ENCODE measurements at regions of chr5 and their contacts with region 1.

Region 1: DNA sequence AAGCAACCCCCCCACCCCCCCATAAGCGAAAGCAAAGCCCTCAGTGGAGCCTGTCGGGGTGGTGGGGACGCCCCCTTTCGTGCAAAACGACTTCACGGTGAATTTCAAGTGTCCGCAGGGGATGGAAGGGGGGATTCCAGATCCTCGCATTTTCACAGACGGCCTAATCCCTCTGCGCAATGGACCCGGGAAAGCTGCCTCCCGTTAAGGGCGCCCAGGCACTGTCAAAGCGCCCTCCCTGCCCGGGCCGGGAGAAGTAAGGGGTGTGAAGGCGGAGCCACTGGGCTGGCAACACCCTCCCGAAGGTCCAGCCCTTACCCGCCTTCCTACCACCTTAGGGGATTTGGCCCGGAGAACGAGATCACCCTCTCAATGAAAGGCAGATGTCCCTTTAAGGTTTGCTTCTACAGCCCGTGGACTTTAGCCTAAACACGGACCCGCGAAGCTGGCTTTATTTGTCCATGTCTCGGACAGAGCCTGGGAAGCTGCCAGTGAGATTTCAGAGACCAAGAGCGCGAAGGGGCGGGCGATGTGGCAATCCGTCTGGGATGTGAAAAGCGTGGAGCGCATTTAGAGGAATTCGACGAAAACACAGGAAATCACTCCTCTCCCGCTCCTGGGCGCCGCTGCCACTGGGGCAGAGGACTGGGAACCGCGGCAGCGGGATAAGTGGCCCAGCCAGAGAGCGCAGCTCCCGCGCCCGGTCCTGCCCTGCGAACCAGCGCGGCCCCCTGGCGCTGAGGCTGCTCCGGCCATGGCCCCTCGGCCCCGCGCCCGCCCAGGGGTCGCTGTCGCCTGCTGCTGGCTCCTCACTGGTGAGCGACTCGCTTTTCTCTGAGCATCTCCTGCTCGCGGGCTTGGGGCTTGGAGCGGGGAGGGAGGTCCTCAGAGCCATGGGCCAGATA is at the starts of genes ITGA1 and PELO:
- DNase-seq: peak; percentile 88 to 90
- H3K4me3 ChIP-seq: peak within 1 kb of the TSS; percentile 62
- H3K4me3 Mint-ChIP-seq: peak within 1 kb of the TSS; percentile 97
- H3K27ac Mint-ChIP-seq: peak within 1 kb of the TSS; percentile 85
- H3K4me1 ChIP-seq: peaks cover 13% of the 10 kb centered on the region
- H3K4me1 Mint-ChIP-seq: peaks cover 34% of the 10 kb centered on the region
- H3K27me3 ChIP-seq: no peaks in the 10 kb centered on the region
- H3K27me3 Mint-ChIP-seq: no peaks in the 10 kb centered on the region
- CTCF ChIP-seq: peak; percentile 43 to 69
- total RNA-seq, gene ITGA1: 26.4 and 27.4 TPM in 2 replicates
- total RNA-seq, gene PELO: 25.9 and 26.7 TPM in 2 replicates

Region 2: DNA sequence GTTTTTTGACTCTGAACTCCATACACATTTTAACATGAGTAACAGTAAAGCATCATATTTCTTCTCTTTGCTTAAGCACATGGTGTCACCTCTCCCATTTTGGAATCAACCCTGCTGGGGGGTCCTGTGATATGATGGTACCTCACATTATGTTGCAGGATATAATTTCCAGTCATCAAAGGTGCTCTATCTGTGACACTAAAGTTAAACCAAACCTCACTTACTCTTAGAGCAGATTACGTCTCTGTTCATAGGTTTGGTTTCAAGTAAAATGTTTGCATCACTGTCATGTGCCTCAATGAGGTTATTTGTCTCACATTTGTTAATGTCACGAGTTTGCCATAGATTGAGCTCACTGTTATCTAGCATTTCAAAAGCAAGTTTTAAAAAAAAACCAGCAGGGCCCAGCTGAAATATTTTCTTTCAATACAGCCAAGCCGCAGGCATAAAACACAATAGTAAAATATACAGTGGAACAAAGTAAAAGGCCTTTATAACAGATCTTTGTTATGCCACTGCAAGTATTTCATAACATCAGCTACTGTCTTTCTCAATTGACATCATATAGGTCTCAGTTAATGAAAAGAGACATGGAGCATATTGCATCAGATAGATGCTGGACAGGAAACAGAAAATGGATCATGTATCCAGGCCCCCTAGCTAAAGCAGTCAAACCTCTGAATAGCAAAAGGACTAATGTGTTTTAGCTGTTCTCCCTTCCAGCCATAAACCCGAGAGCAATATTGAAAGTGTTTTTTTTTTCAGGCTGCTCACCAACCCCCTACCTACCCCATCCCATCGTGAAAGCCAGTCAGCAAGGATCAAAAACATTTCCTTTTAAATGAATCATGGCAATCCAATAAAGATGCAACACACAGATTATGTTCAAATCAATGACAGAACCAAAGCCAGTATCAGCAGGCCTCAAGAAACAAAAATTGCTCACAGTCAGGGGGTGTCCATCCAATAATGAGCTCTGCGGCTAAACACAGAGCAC is 182.2 kb before region 1 on chr5:
- CTCF ChIA-PET with region 1: no interaction called
- POLR2A ChIA-PET with region 1: no interaction called
- intact Hi-C with region 1: no loop called
- DNase-seq: no peak
- H3K4me3 ChIP-seq: no peak overlapping the region
- H3K4me3 Mint-ChIP-seq: no peak overlapping the region
- H3K27ac Mint-ChIP-seq: no peak overlapping the region
- H3K4me1 ChIP-seq: peaks cover 19% of the 10 kb centered on the region
- H3K4me1 Mint-ChIP-seq: no peaks in the 10 kb centered on the region
- H3K27me3 ChIP-seq: no peaks in the 10 kb centered on the region
- H3K27me3 Mint-ChIP-seq: peaks cover 6% of the 10 kb centered on the region
- CTCF ChIP-seq: peak in 1 of 2 experiments; percentile 1

Region 3: GRCh38 chr5:52693280-52693679 is 94.6 kb before region 1 on chr5:
- CTCF ChIA-PET with region 1: interaction called, 3 read pairs
- POLR2A ChIA-PET with region 1: no interaction called
- intact Hi-C with region 1: loop called (anchors 1 kb)
- DNase-seq: peak in 1 of 2 experiments; percentile 24
- H3K4me3 ChIP-seq: no peak overlapping the region
- H3K4me3 Mint-ChIP-seq: no peak overlapping the region
- H3K27ac Mint-ChIP-seq: no peak overlapping the region
- H3K4me1 ChIP-seq: peaks cover 4% of the 10 kb centered on the region; the same call in 1 of the 2 replicates
- H3K4me1 Mint-ChIP-seq: peaks cover 11% of the 10 kb centered on the region
- H3K27me3 ChIP-seq: no peaks in the 10 kb centered on the region
- H3K27me3 Mint-ChIP-seq: peaks cover 14% of the 10 kb centered on the region
- CTCF ChIP-seq: peak; percentile 50 to 76

Region 4: GRCh38 chr5:52767766-52768480 is 19.9 kb before region 1 on chr5:
- CTCF ChIA-PET with region 1: no interaction called
- POLR2A ChIA-PET with region 1: no interaction called
- intact Hi-C with region 1: no loop called
- DNase-seq: no peak
- H3K4me3 ChIP-seq: no peak overlapping the region
- H3K4me3 Mint-ChIP-seq: no peak overlapping the region
- H3K27ac Mint-ChIP-seq: no peak overlapping the region
- H3K4me1 ChIP-seq: no peaks in the 10 kb centered on the region
- H3K4me1 Mint-ChIP-seq: no peaks in the 10 kb centered on the region
- H3K27me3 ChIP-seq: no peaks in the 10 kb centered on the region
- H3K27me3 Mint-ChIP-seq: peaks cover 2% of the 10 kb centered on the region
- CTCF ChIP-seq: no peak

Region 5: DNA sequence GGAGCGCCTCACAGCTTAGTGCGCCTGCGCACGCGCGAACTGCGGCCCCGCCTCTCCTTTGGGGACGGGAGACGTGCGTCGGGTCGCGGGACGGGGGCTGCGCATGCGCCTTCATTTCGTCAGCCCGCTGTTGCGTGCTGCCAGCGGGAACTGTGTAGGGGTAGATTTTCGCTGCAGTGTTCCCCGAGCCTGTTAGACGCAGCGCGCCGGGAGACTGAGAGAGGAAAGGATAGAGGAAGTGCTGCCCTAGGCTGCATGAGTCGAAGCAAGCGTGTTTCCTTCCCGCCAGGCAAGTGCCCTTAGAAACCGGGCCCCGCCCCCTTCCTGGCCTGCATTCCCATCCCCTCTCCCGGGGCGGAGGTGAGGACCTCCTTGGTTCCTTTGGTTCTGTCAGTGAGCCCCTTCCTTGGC is 12.1 kb after region 1 on chr5:
- CTCF ChIA-PET with region 1: interaction called, 23 read pairs
- POLR2A ChIA-PET with region 1: interaction called, 19 read pairs
- intact Hi-C with region 1: loop called (anchors 1 kb)
- DNase-seq: peak; percentile 95 to 96
- H3K4me3 ChIP-seq: peak overlapping the region; percentile 76
- H3K4me3 Mint-ChIP-seq: peak overlapping the region; percentile 92
- H3K27ac Mint-ChIP-seq: peak overlapping the region; percentile 50
- H3K4me1 ChIP-seq: peaks cover 46% of the 10 kb centered on the region
- H3K4me1 Mint-ChIP-seq: peaks cover 38% of the 10 kb centered on the region
- H3K27me3 ChIP-seq: no peaks in the 10 kb centered on the region
- H3K27me3 Mint-ChIP-seq: no peaks in the 10 kb centered on the region
- CTCF ChIP-seq: no peak

Region 6: DNA sequence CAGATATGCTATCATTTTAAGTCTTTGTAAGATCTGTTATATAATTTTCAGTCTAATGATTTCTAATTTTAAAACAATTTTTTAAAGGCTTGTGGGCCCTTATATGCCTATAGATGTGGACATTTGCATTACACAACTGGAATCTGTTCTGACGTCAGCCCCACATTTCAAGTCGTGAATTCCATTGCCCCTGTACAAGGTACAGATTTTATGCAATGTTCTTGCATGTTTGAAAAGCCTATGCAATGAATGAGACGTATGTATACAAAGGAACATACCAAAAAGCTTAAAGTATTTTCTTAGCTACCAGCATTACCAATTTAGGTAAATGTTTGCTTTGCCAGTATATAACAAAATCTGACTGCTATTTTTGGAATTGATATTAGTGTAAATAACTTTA is 77.0 kb after region 1 on chr5:
- CTCF ChIA-PET with region 1: no interaction called
- POLR2A ChIA-PET with region 1: no interaction called
- intact Hi-C with region 1: loop called (anchors 1 kb)
- DNase-seq: peak; percentile 57 to 71
- H3K4me3 ChIP-seq: no peak overlapping the region
- H3K4me3 Mint-ChIP-seq: no peak overlapping the region
- H3K27ac Mint-ChIP-seq: no peak overlapping the region
- H3K4me1 ChIP-seq: peaks cover 27% of the 10 kb centered on the region
- H3K4me1 Mint-ChIP-seq: peaks cover 18% of the 10 kb centered on the region
- H3K27me3 ChIP-seq: no peaks in the 10 kb centered on the region
- H3K27me3 Mint-ChIP-seq: no peaks in the 10 kb centered on the region
- CTCF ChIP-seq: no peak

Region 7: DNA sequence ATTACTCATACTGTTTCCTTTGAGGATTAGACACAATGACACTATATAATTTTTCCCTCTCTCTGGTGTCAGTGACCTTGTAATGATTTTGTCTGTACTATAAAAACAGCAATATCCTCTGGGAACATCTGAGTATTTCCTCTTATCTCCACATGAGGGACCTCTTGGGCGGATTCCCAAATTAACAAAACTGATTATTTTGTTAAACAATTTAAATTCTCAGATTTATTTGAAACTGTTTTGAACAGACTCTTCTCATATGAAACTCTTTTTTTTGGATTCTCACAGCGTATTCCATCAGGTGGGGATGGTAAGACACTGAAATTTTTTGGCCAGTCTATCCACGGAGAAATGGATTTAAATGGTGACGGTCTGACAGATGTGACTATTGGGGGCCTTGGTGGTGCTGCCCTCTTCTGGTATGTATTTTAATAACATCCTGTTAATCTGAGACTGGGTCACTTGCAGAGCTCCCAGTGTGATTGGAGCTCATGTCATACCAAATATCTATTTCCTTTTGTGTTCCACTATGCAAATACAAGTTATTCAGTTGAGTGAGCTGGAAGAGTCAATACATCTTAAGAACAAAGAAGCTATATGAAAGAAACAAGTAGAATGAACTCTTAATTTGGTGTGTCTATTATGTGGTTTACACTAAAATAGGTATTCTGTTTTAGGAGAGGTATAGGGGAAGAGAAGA is 127.5 kb after region 1 on chr5:
- CTCF ChIA-PET with region 1: interaction called, 21 read pairs
- POLR2A ChIA-PET with region 1: no interaction called
- intact Hi-C with region 1: loop called (anchors 1 kb)
- DNase-seq: peak; percentile 57 to 78
- H3K4me3 ChIP-seq: 0 out of 2 replicates have a peak overlapping the region, but pooled peaks have one; percentile 12
- H3K4me3 Mint-ChIP-seq: peak overlapping the region; percentile 62
- H3K27ac Mint-ChIP-seq: no peak overlapping the region
- H3K4me1 ChIP-seq: no peaks in the 10 kb centered on the region
- H3K4me1 Mint-ChIP-seq: no peaks in the 10 kb centered on the region
- H3K27me3 ChIP-seq: no peaks in the 10 kb centered on the region
- H3K27me3 Mint-ChIP-seq: no peaks in the 10 kb centered on the region
- CTCF ChIP-seq: peak; percentile 62 to 84

Region 8: DNA sequence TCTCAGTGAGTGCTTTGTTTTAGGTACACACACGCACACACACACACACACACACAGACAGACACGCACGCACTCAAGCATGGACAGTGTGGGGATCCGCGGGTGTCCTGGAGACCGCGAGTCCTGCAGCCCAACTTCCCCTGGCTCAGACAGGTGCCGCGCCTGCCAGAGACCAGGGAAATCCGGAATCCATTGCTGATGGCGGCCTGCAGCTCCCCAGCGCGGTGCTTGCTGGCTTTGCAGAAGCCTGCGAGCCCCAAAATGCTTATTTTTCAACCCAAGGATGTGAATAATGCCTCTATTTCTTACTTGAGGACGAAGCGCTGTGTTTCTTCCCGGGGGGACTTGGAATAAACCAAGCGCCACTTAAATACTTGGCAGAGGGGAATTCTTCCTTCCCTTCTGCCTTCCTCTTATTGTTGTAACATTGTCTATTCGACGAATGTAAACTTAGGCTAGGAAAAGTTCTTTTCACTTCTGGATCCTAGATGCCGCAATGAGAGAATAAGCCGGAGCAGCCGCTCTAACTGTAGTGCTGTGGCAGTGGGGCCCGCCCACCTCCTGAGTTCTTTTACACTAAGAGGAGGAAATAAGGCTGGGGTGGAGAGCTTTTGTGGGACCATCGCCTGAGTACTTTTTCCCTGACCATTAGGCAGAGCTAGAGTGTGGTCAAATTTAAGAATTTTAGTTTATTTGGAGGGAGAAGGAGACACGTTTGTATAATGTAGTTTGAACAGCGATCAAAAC is 202.1 kb after region 1 on chr5:
- CTCF ChIA-PET with region 1: no interaction called
- POLR2A ChIA-PET with region 1: no interaction called
- intact Hi-C with region 1: loop called (anchors 2 kb)
- DNase-seq: peak; percentile 65 to 68
- H3K4me3 ChIP-seq: peak overlapping the region; percentile 56
- H3K4me3 Mint-ChIP-seq: peak overlapping the region; percentile 85
- H3K27ac Mint-ChIP-seq: peak overlapping the region; percentile 60
- H3K4me1 ChIP-seq: peaks cover 22% of the 10 kb centered on the region
- H3K4me1 Mint-ChIP-seq: peaks cover 34% of the 10 kb centered on the region
- H3K27me3 ChIP-seq: no peaks in the 10 kb centered on the region
- H3K27me3 Mint-ChIP-seq: no peaks in the 10 kb centered on the region
- CTCF ChIP-seq: peak; percentile 25 to 67

Region 9: GRCh38 chr5:53095931-53096525 is 308.2 kb after region 1 on chr5:
- CTCF ChIA-PET with region 1: no interaction called
- POLR2A ChIA-PET with region 1: no interaction called
- intact Hi-C with region 1: loop called (anchors 1 kb)
- DNase-seq: peak; percentile 55 to 65
- H3K4me3 ChIP-seq: no peak overlapping the region
- H3K4me3 Mint-ChIP-seq: no peak overlapping the region
- H3K27ac Mint-ChIP-seq: no peak overlapping the region
- H3K4me1 ChIP-seq: peaks cover 10% of the 10 kb centered on the region
- H3K4me1 Mint-ChIP-seq: peaks cover 8% of the 10 kb centered on the region
- H3K27me3 ChIP-seq: no peaks in the 10 kb centered on the region
- H3K27me3 Mint-ChIP-seq: no peaks in the 10 kb centered on the region
- CTCF ChIP-seq: peak; percentile 73

Region 10: DNA sequence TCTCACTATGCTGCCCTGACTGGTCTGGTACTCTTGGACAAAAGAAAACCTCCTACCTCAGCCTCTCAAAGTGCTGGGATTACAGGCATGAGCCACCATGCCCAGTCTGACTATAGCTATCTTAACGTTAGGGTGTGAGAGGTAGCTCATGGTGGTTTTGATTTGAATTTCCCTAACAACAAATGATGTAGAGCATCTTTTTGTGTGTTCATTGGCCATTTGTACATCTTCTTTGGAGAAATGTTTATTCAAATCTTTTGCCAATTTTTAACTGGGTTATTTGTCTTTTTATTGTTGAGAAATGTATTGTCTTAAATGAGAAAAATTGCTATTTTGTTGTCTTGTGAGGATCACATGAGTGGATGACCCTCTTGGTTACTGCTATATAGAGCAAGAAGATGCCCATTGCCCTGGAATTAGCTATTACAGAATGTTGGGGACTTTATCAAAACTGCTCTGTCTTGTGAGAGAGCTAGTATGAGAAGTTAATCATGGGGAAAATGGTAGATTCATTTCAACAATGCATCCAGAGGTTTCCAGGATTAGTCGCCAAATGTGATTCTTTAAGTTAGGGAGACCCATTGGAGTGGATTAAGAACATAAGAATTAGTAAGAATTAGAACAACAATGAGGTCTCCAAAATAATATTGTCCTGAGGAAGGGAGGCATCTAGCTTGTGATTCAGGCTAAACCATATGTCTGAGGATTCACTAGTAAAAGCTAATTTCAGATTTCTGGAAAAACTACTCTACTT is 446.0 kb after region 1 on chr5:
- CTCF ChIA-PET with region 1: no interaction called
- POLR2A ChIA-PET with region 1: no interaction called
- intact Hi-C with region 1: no loop called
- DNase-seq: no peak
- H3K4me3 ChIP-seq: no peak overlapping the region
- H3K4me3 Mint-ChIP-seq: no peak overlapping the region
- H3K27ac Mint-ChIP-seq: no peak overlapping the region
- H3K4me1 ChIP-seq: no peaks in the 10 kb centered on the region
- H3K4me1 Mint-ChIP-seq: no peaks in the 10 kb centered on the region
- H3K27me3 ChIP-seq: no peaks in the 10 kb centered on the region
- H3K27me3 Mint-ChIP-seq: peaks cover 5% of the 10 kb centered on the region
- CTCF ChIP-seq: no peak

Measured in Caco-2 (cell line).